Right ventricle myocardium superior (tissue), 1 donor: ENCODE measurements at regions of chr4 and their contacts with region 1.

Region 1: GRCh38 chr4:39977489-39978377 is at the start of gene PDS5A:
- DNase-seq: peak; percentile 93
- ATAC-seq: peak; percentile 95
- total RNA-seq, gene PDS5A: 31.1 TPM

Region 2: GRCh38 chr4:39469429-39470077 is 508.2 kb before region 1 on chr4:
- intact Hi-C with region 1: loop called (anchors 5 kb)
- DNase-seq: no peak
- ATAC-seq: peak; percentile 90

Region 3: GRCh38 chr4:39638354-39639240 is 339.1 kb before region 1 on chr4 and contains the start of gene SMIM14:
- intact Hi-C with region 1: loop called (anchors 2 kb)
- DNase-seq: peak; percentile 99
- ATAC-seq: peak; percentile 98
- total RNA-seq, gene SMIM14: 11.3 TPM

Region 4: DNA sequence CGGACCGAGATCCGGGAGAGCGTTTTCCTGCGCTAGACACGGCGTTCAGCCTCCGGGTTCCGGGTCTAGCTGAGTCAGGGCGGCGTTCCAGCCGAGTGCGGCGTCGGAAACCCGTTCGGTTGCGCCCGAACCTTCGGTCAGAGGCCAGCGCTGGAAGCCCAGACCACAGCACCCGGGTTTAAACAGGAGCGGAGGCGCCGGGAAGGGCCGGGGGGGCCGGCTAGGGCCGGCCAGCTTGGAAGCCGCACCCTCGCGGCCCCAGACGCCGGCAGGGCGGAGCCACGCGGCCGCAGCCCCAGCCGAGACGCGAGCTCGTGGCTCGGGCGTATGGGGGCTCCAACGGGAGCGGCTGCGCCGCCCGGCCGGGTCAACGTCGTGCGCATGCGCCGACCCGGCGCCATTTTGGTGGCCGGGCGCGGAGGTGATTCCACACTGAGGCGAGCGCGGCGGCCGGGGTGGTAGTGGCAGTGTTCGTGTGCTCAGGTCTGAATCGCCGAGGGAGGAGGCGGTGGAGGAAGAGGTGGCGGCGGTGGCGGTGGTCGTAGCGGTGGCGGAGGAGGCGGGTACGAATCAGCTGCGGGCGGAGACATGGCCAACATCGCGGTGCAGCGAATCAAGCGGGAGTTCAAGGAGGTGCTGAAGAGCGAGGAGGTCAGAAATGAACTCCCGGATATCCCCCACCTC is 279.9 kb before region 1 on chr4 and contains the start of gene UBE2K:
- intact Hi-C with region 1: loop called (anchors 5 kb)
- DNase-seq: peak; percentile 94
- ATAC-seq: peak; percentile 99
- total RNA-seq, gene UBE2K: 57.7 TPM

Region 5: DNA sequence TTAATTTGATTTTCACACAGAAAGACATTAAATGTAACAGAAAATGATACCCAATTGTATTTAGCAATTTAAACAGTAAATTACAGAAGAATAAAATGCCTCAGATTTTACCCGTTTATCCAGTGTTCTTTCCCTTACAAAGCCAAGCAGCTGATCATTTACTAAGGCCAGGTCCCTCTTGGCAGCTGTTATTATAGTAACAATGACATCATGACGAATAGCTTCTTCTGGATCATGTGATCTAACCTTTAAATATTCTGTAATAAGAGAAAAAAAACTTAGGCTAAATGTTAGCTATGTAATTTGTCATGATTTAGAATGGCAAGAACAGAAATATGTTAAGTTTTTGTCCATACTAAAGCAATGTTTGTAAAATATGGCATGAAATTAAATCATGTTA is 69.4 kb before region 1 on chr4:
- intact Hi-C with region 1: loop called (anchors 10 kb)
- DNase-seq: no peak
- ATAC-seq: no peak

Region 6: DNA sequence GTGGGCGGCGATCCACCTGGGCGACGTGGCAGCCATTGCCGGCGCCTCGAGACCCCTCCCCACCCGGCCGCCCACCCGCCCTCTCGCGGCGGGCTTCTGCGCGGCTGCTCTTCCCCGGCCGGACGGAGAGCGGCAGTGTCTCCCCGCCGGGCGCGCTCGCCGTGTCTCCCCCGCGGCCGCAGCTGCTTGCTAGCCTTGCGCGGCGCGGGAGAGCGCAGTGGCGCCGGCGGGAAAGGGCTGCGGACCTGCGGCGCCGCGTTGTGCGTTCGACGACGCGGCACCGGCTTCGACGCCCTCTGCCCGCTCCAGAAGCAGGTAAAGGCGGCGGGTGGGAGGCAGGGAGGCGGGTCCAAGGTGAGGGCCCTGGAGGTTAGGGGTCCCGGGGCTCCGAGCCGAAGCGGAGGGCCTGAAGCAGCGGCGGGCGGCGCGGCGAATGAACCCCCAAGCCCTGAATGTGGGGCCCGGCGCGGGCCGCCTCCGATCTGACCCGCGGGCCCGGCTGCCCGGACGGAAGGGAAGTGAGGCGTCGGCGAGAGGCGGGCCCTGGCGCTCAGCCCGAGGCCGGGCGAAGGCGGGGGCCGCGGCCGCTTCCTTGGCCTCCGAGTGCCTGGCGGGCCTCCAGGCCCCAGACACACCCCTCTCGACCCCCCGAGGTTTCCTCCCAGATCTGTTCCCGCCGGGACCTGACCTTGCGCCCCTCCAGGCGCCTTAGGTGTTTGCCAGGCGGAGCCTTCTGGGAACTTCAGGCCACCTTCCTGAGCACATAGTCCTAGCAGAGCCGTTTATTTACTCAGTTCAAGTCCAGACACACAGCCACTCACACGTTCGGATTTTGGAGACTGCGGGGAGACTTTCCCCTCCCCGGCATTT is 79.2 kb after region 1 on chr4 and contains the start of gene N4BP2:
- intact Hi-C with region 1: loop called (anchors 5 kb)
- DNase-seq: peak; percentile 92
- ATAC-seq: peak; percentile 88
- total RNA-seq, gene N4BP2: 3.9 TPM